Activated CD4-positive, alpha-beta T cell treated with anti-CD3 and anti-CD28 coated beads for 36 hours (primary cell): ENCODE measurements at regions of chr10 and their contacts with region 1.

Region 1: GRCh38 chr10:6580279-6581029 is 378 bp upstream of the PRKCQ start:
- DNase-seq: peak; percentile 93
- ATAC-seq: peak; percentile 72
- H3K4me3 Mint-ChIP-seq: peak overlapping the region; percentile 89
- H3K27ac Mint-ChIP-seq: peak overlapping the region; percentile 97
- H3K4me1 Mint-ChIP-seq: peaks cover 59% of the 10 kb centered on the region
- H3K27me3 Mint-ChIP-seq: no peaks in the 10 kb centered on the region

Region 2: DNA sequence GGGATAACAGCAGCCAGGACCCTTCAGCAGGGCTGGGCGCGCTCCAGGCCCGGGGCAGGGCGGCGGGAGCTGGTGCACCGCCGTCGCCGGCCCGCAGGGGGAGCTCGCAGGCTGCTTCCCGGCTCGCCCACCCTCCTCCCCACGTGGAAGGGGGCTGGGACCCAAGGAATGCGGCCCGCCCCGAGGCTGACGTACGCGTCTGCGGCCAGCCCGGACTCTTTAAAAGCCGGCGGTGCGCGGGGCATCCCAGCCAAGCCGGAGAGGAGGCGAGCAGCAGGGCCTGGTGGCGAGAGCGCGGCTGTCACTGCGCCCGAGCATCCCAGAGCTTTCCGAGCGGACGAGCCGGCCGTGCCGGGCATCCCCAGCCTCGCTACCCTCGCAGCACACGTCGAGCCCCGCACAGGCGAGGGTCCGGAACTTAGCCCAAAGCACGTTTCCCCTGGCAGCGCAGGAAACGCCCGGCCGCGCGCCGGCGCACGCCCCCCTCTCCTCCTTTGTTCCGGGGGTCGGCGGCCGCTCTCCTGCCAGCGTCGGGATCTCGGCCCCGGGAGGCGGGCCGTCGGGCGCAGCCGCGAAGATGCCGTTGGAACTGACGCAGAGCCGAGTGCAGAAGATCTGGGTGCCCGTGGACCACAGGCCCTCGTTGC is 377.6 kb before region 1 on chr10 and contains the start of gene PFKFB3:
- CTCF ChIA-PET with region 1: no interaction called
- POLR2A ChIA-PET with region 1: no interaction called
- intact Hi-C with region 1: loop called (anchors 5 kb)
- DNase-seq: peak; percentile 98
- ATAC-seq: peak; percentile 64
- H3K4me3 Mint-ChIP-seq: peak within 1 kb of the TSS; percentile 89
- H3K27ac Mint-ChIP-seq: peak within 1 kb of the TSS; percentile 95
- H3K4me1 Mint-ChIP-seq: peaks cover 43% of the 10 kb centered on the region
- H3K27me3 Mint-ChIP-seq: no peaks in the 10 kb centered on the region
- total RNA-seq, gene PFKFB3: 133 to 183 TPM

Region 3: DNA sequence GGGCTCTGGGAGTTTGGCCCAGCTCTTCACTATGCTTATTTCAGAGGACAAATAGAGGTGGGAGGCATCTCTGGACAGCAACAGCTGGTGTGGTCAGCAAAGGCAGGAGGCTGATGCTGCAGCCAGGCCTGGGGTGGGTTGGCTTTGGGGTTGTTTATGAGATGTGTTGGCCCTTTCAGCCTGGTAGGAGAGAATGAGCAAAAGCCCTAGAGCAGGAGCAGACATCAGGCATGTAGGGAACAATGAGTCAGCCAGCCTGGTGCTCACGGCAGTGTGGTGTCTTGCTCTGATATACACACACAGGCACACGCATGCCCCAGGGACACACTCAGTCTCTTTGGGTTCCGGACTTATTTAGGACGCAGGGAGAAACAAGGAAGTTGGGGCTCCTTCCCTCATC is 157.4 kb before region 1 on chr10:
- CTCF ChIA-PET with region 1: interaction called, 4 read pairs
- POLR2A ChIA-PET with region 1: no interaction called
- intact Hi-C with region 1: loop called in 1 of 2 experiments (anchors 2 kb)
- DNase-seq: peak; percentile 83
- ATAC-seq: peak; percentile 98
- H3K4me3 Mint-ChIP-seq: no peak overlapping the region
- H3K27ac Mint-ChIP-seq: peak overlapping the region; percentile 58
- H3K4me1 Mint-ChIP-seq: peaks cover 28% of the 10 kb centered on the region
- H3K27me3 Mint-ChIP-seq: no peaks in the 10 kb centered on the region

Region 4: DNA sequence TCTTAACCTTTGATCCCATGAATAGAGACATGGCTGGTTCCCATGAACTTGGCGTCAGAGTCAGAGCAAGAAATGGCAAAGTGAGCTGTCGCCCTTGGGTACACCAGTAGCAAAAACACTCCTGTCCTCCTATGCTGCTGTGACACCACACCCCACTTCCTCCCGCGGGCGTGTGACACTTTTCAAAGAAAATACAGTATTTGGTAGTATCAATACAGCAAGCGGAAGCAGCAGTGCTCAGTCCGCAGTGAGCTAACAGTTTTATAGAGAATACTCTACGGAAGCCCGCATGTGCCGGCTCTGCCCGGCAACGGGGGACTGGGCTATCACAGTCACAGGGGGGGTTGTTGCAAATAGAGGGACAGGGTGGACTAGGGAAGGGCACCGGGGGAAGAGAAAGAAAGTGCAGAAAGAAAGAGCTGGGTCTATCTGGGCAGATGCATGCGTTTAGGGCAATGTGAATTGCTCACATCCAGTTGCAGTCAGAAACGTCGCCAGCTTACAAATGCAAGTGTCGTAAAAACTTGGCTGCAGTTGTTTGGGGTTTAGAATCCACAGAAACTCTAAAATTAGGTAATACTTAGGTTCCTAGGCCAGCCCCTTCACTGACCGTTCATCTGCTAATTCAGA is 50.1 kb before region 1 on chr10:
- CTCF ChIA-PET with region 1: interaction called, 4 read pairs
- POLR2A ChIA-PET with region 1: interaction called, 8 read pairs
- intact Hi-C with region 1: loop called in 1 of 2 experiments (anchors 1 kb)
- DNase-seq: peak; percentile 88
- ATAC-seq: peak; percentile 93
- H3K4me3 Mint-ChIP-seq: peak overlapping the region; percentile 78
- H3K27ac Mint-ChIP-seq: peak overlapping the region; percentile 98
- H3K4me1 Mint-ChIP-seq: peaks cover 79% of the 10 kb centered on the region
- H3K27me3 Mint-ChIP-seq: no peaks in the 10 kb centered on the region

Region 5: GRCh38 chr10:6601246-6601805 is 20.9 kb after region 1 on chr10:
- CTCF ChIA-PET with region 1: interaction called, 11 read pairs
- POLR2A ChIA-PET with region 1: interaction called, 4 read pairs
- intact Hi-C with region 1: loop called (anchors 2 kb)
- DNase-seq: peak; percentile 42
- ATAC-seq: peak; percentile 43
- H3K4me3 Mint-ChIP-seq: no peak overlapping the region
- H3K27ac Mint-ChIP-seq: peak overlapping the region; percentile 90
- H3K4me1 Mint-ChIP-seq: peaks cover 67% of the 10 kb centered on the region
- H3K27me3 Mint-ChIP-seq: no peaks in the 10 kb centered on the region

Region 6: DNA sequence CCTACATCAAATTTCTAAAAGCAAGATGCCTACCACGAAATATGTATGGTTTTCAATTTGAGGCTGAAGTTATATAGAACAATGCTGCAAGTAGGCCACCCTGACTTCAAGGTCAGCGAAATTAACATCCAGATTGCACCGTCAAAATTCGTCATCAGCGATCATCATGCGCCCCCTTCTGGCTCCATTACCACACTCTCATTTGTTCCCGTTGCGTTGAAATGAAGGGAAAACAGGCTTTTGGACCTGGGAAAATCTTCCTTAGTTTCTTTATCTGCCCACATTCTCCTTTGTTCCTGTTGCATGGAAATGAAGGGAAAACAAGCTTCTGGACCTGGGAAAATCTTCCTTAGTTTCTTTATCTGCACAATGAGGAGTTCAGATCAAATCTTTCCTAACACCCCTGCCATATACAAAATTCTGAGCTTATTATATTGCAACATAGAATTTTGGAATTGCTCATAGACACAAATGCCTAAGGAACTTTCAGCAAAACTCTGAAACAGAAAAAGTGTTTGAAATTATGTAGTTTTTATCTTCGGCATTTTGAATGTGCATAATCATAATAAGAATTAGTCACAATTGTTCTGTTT is 97.9 kb after region 1 on chr10:
- CTCF ChIA-PET with region 1: interaction called, 10 read pairs
- POLR2A ChIA-PET with region 1: no interaction called
- intact Hi-C with region 1: no loop called
- DNase-seq: peak; percentile 80
- ATAC-seq: peak; percentile 39
- H3K4me3 Mint-ChIP-seq: no peak overlapping the region
- H3K27ac Mint-ChIP-seq: no peak overlapping the region
- H3K4me1 Mint-ChIP-seq: peaks cover 6% of the 10 kb centered on the region
- H3K27me3 Mint-ChIP-seq: no peaks in the 10 kb centered on the region